ENCODE measurements at regions of chr22 and their contacts with region 1.

Region 1: DNA sequence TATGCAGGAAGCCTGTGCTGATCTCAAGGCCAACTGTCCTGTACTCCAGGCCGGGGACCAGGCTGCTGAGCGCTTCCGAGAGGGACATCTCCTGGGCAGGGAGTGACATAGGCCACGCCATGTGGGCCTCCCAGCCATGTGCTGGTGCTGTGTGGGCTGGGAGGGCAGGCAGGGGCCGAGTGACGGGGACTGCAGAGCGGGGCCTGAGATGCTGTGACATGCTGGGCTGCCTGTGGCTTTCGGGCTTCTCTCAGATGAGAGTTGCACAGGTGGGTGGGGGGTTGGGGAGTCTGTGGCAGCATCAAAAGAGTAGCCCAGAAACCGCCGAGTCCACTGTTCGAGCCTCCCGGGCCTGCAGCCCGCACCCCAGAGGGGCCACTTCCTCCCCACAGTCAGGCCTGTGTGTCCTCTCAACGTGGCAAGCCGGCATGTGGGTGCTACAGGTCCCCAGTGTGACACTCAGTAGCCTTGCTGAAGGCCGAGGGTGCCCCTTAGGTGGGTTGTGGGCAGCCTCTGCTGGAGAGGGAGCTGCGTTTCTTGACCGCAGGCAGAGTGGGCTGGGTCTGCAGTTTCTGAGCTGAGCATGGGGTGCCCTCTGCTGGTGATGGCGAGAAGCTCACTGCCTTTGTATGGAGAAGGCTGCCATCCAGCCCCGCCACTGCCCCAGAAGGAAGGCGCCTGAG is 101.2 kb downstream of the BCR start:
- DNase-seq: peak; percentile 84
- H3K4me3 ChIP-seq: no peak overlapping the region
- H3K27ac ChIP-seq: peak overlapping the region; percentile 75
- H3K4me1 ChIP-seq: peaks cover 30% of the 10 kb centered on the region
- H3K27me3 ChIP-seq: no peaks in the 10 kb centered on the region
- CTCF ChIP-seq: peak; percentile 90 to 94
- POLR2A ChIP-seq: no peak

Region 2: GRCh38 chr22:22959147-22959827 is 322.3 kb before region 1 on chr22:
- CTCF ChIA-PET with region 1: interaction called, 10 read pairs
- POLR2A ChIA-PET with region 1: no interaction called
- dilution Hi-C with region 1: no loop called
- intact Hi-C with region 1: loop called (anchors 2 kb)
- DNase-seq: peak; percentile 71
- H3K4me3 ChIP-seq: no peak overlapping the region
- H3K27ac ChIP-seq: no peak overlapping the region
- H3K4me1 ChIP-seq: no peaks in the 10 kb centered on the region
- H3K27me3 ChIP-seq: peaks cover 9 to 17% of the 10 kb centered on the region in 2 experiments
- CTCF ChIP-seq: peak; percentile 70 to 81
- POLR2A ChIP-seq: no peak

Region 3: DNA sequence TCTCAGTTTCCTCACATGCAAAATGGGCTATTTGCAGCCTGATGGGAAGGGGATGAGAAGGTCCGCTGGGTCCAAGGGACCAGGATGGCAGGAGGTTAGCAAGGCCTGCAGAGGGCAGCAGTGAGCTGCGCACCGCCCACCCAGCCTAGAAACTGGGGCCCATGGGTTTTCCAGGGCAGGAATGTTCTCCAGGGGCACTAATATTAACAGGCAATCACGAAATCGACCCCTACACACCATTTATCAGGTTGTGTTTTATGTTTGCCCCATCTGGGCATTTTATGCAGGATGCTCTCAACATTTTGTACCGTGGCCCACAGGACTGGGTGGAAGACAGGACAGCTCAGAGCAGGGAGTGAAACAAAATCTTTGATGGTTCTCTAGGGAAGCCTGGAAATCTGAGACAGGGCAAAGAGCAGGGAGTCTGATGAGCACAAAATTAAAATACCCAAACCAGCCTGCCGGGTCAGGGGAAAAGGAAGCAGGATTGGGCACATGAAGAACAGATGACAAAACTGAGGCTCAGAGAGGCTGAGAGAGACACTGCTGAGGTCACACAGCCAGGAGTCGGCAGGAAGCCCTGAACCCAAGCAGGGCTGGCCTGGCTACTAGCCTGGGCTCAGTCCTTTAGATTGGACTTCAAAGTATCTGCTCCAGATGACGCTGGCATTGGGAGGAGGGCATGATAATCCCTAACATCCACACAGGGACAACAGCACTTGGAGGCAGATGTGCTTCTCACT is 102.9 kb before region 1 on chr22:
- CTCF ChIA-PET with region 1: interaction called, 451 read pairs
- POLR2A ChIA-PET with region 1: interaction called, 8 read pairs
- dilution Hi-C with region 1: no loop called
- intact Hi-C with region 1: loop called (anchors 1 kb)
- DNase-seq: peak; percentile 70
- H3K4me3 ChIP-seq: no peak overlapping the region
- H3K27ac ChIP-seq: peak overlapping the region; percentile 19
- H3K4me1 ChIP-seq: peaks cover 19% of the 10 kb centered on the region
- H3K27me3 ChIP-seq: no peaks in the 10 kb centered on the region
- CTCF ChIP-seq: peak; percentile 94 to 96
- POLR2A ChIP-seq: no peak

Region 4: GRCh38 chr22:23225724-23226496 is 55.6 kb before region 1 on chr22:
- CTCF ChIA-PET with region 1: interaction called, 29 read pairs
- POLR2A ChIA-PET with region 1: no interaction called
- dilution Hi-C with region 1: no loop called
- intact Hi-C with region 1: no loop called
- DNase-seq: peak; percentile 85
- H3K4me3 ChIP-seq: no peak overlapping the region
- H3K27ac ChIP-seq: peak overlapping the region; percentile 87
- H3K4me1 ChIP-seq: peaks cover 62% of the 10 kb centered on the region
- H3K27me3 ChIP-seq: no peaks in the 10 kb centered on the region
- CTCF ChIP-seq: no peak
- POLR2A ChIP-seq: no peak

Region 5: GRCh38 chr22:23264610-23265367 is 16.8 kb before region 1 on chr22:
- CTCF ChIA-PET with region 1: interaction called, 12 read pairs
- POLR2A ChIA-PET with region 1: no interaction called
- dilution Hi-C with region 1: no loop called
- intact Hi-C with region 1: no loop called
- DNase-seq: no peak
- H3K4me3 ChIP-seq: no peak overlapping the region
- H3K27ac ChIP-seq: no peak overlapping the region
- H3K4me1 ChIP-seq: no peaks in the 10 kb centered on the region
- H3K27me3 ChIP-seq: no peaks in the 10 kb centered on the region
- CTCF ChIP-seq: no peak
- POLR2A ChIP-seq: no peak

Region 6: GRCh38 chr22:23373601-23374000 is 92.1 kb after region 1 on chr22:
- CTCF ChIA-PET with region 1: no interaction called
- POLR2A ChIA-PET with region 1: no interaction called
- dilution Hi-C with region 1: no loop called
- intact Hi-C with region 1: no loop called
- DNase-seq: no peak
- H3K4me3 ChIP-seq: no peak overlapping the region
- H3K27ac ChIP-seq: no peak overlapping the region
- H3K4me1 ChIP-seq: no peaks in the 10 kb centered on the region
- H3K27me3 ChIP-seq: peaks cover 10 to 13% of the 10 kb centered on the region in 2 experiments
- CTCF ChIP-seq: no peak
- POLR2A ChIP-seq: no peak

Region 7: DNA sequence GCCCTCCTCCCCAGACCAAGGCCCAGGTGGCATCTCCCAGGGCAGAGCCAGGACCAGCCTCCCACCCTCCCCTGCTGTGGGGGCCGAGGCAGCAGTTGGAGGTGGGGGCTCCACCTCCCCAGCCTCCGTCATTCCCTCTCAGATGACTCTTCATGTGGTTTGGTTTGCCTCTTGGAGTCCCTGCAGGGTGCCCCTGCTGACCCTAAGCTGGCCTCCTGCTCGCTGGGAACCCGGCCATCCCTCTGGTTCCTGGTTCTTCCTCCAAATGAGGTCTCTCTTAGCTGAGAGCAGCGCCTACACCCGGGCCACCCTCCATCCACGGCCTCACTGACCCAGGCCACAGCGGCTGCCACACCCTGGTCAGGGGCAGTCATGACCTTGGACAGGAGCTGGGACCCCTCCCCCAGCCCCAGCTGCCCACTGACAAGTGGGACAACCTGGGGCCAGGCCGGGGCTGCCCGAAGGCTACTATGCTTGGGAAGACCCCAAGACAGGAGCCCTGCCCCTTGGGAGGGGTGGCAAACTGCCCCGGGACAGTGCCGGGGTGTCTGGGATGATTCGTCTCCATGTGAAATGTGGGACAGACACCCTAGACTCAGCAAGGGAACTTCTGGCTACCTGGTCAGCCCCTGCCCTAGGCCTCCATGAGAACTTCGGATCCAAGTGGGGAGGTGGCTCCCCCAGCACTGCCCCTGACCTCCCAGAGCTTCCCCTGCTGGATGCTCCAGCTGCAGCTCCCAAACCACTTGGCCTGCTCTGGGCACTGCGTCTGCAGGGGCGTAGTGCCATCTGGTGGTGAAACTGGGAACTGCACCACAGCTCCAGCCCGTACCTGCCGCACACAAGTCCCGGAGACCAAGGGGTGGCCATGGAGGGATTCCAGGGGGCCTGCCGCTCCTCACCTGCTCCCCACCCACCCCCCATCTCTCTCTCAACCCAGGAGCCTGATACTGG is 104.0 kb after region 1 on chr22:
- CTCF ChIA-PET with region 1: interaction called, 24 read pairs
- POLR2A ChIA-PET with region 1: no interaction called
- dilution Hi-C with region 1: no loop called
- intact Hi-C with region 1: loop called (anchors 1 kb)
- DNase-seq: peak; percentile 84
- H3K4me3 ChIP-seq: no peak overlapping the region
- H3K27ac ChIP-seq: no peak overlapping the region
- H3K4me1 ChIP-seq: no peaks in the 10 kb centered on the region
- H3K27me3 ChIP-seq: no peaks in the 10 kb centered on the region
- CTCF ChIP-seq: peak; percentile 90 to 98
- POLR2A ChIP-seq: no peak

Region 8: GRCh38 chr22:23485490-23485889 is 203.9 kb after region 1 on chr22:
- CTCF ChIA-PET with region 1: no interaction called
- POLR2A ChIA-PET with region 1: no interaction called
- dilution Hi-C with region 1: no loop called
- intact Hi-C with region 1: no loop called
- DNase-seq: no peak
- H3K4me3 ChIP-seq: no peak overlapping the region
- H3K27ac ChIP-seq: no peak overlapping the region
- H3K4me1 ChIP-seq: no peaks in the 10 kb centered on the region
- H3K27me3 ChIP-seq: peaks cover 4 to 8% of the 10 kb centered on the region in 2 experiments
- CTCF ChIP-seq: no peak
- POLR2A ChIP-seq: no peak

Measured in endothelial cell of umbilical vein (primary cell).